ENCODE measurements at regions of chr16 and their contacts with region 1.

Region 1: GRCh38 chr16:24041826-24042631 is 206.2 kb downstream of the PRKCB start:
- DNase-seq: peak; percentile 40 to 83 (median 69)
- ATAC-seq: peak; percentile 57 to 86 (median 68)
- H3K4me3 ChIP-seq: no peak overlapping the region
- H3K4me3 Mint-ChIP-seq: no peak overlapping the region
- H3K27ac ChIP-seq: no peak overlapping the region
- H3K27ac Mint-ChIP-seq: no peak overlapping the region
- H3K4me1 ChIP-seq: peaks cover 0 to 9% of the 10 kb centered on the region in 2 experiments
- H3K4me1 Mint-ChIP-seq: peaks cover 9 to 21% (median 12%) of the 10 kb centered on the region in 3 donors
- H3K27me3 ChIP-seq: no peaks in the 10 kb centered on the region
- H3K27me3 Mint-ChIP-seq: no peaks in the 10 kb centered on the region

Region 2: DNA sequence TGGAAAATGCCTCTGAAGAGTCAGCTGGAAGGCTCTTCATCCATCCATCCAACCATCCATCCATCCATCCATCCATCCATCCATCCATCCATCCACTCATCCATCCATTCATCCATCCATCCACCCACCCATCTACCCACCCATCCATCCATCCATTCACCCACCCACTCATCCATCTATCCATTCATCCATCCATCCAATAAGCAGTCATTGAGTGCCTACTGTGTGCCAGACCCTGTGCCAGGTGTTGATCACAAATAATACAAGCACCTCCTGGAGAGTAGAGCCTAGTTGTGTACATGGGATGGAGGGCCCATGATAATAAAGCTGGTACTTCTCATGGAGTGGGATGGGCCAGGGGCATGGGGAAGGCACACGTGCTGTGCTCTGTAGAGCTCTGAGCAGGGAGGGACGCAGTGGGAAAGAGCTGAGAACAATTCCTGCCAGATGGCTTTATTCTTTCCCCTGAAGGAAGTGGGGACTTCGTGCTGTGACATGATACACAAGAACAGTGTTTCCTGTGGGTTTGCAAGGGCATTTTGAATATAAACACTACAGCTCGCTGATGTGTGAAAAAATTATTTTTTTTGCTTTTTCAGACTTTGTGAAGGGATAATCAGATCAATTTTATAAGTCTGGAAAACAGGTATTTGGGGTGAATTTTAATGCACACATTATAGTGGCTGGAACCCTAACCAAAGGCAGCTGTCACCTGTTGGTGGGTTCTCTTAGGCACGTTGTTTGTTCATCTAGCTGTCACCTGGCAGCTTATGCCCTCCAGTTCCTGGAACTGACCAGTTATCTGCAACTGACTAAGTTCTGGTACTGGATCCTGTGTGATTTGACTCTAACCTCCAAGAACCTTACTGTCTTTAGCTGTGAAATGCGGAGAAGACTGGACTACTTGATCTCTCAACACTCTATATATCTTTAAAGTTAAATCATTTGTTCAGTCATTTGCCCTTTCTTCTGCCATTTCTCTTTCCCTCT is 144.9 kb before region 1 on chr16:
- CTCF ChIA-PET with region 1: no interaction called
- POLR2A ChIA-PET with region 1: no interaction called
- DNase-seq: peak in 2 of 35 experiments; percentile 2 to 35
- ATAC-seq: peak; percentile 48 to 84 (median 72)
- H3K4me3 ChIP-seq: peak overlapping the region in 1 of 2 donors; percentile 35
- H3K4me3 Mint-ChIP-seq: peak overlapping the region in 1 of 3 donors; percentile 63
- H3K27ac ChIP-seq: peak overlapping the region; percentile 18
- H3K27ac Mint-ChIP-seq: peak overlapping the region; percentile 86
- H3K4me1 ChIP-seq: peaks cover 21 to 33% of the 10 kb centered on the region in 2 experiments
- H3K4me1 Mint-ChIP-seq: peaks cover 59 to 73% (median 68%) of the 10 kb centered on the region in 3 donors
- H3K27me3 ChIP-seq: no peaks in the 10 kb centered on the region
- H3K27me3 Mint-ChIP-seq: no peaks in the 10 kb centered on the region

Region 3: DNA sequence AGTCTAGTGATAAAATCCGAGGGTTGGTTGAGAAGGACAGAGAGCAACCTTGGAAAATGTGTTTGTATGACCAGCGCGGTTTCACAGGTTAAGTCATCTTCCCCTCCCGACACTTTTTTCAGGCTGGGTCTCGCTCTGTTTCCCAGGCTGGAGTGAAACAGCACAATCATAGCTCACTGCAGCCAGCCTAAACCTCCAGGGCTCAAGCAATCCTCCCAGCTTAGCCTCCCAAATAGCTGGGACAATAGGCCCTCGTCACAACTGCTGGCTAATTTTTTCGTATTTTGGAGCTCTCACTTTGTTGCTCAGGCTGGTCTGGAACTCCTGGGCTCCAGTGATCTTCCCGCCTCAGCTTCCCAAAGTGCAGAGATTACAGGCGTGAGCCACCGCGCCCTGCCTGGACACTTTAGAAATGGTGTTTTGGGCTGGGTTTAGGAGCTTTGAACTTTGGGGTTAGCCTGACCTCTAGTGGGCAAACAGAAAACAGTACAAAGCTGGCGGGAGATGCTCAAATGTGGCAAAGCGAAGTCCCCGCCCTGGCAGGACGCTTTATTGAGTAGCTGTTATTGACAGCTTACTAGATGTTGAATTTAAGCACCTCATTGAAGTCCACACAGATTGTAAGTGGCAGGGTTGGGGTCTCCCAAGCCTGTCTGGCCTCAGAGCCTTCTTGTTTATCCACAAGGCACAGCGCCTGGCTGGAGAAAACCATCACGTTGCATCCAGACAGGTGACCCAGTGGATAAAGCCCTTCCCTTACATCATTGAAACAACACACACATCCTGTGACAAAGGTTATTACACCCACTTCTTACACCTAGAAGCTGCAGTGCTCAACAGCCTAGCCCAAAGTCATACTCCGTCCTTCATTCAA is 462.7 kb after region 1 on chr16:
- CTCF ChIA-PET with region 1: interaction called in 1 of 2 experiments, 15 read pairs
- POLR2A ChIA-PET with region 1: no interaction called
- DNase-seq: peak in 34 of 35 experiments; percentile 10 to 79 (median 32)
- ATAC-seq: peak; percentile 55 to 88 (median 86)
- H3K4me3 ChIP-seq: no peak overlapping the region
- H3K4me3 Mint-ChIP-seq: no peak overlapping the region
- H3K27ac ChIP-seq: no peak overlapping the region
- H3K27ac Mint-ChIP-seq: no peak overlapping the region
- H3K4me1 ChIP-seq: no peaks in the 10 kb centered on the region
- H3K4me1 Mint-ChIP-seq: no peaks in the 10 kb centered on the region
- H3K27me3 ChIP-seq: peaks cover 0 to 29% of the 10 kb centered on the region in 2 experiments
- H3K27me3 Mint-ChIP-seq: peaks cover 19 to 22% of the 10 kb centered on the region in 2 donors

Measured in T-cell (primary cell).